Activated T-helper 1 cell treated with anti-CD3 and anti-CD28 coated beads, Interleukin-12 subunit alpha, Interleukin-12 subunit beta, Interleukin-2, Interleukin-4 antibody, amounts not matched to agents 30 ng/mL and 10 ng/mL and 1 ng/mL, durations not matched to agents 14 hours and 24 hours and 36 hours (primary cell): ENCODE measurements at regions of chr10 and their contacts with region 1.

Region 1: GRCh38 chr10:3935141-3935540 is 150.1 kb upstream of the KLF6 start:
- DNase-seq: peak; percentile 75
- H3K4me3 Mint-ChIP-seq: peak overlapping the region; percentile 56
- H3K27ac Mint-ChIP-seq: peak overlapping the region; percentile 86
- H3K4me1 Mint-ChIP-seq: peaks cover 67% of the 10 kb centered on the region
- H3K27me3 Mint-ChIP-seq: peaks cover 3% of the 10 kb centered on the region

Region 2: GRCh38 chr10:3330663-3331062 is 604.5 kb before region 1 on chr10:
- intact Hi-C with region 1: no loop called
- DNase-seq: no peak
- H3K4me3 Mint-ChIP-seq: no peak overlapping the region
- H3K27ac Mint-ChIP-seq: no peak overlapping the region
- H3K4me1 Mint-ChIP-seq: no peaks in the 10 kb centered on the region
- H3K27me3 Mint-ChIP-seq: no peaks in the 10 kb centered on the region

Region 3: GRCh38 chr10:3467052-3467951 is 467.8 kb before region 1 on chr10:
- intact Hi-C with region 1: loop called (anchors 2 kb)
- DNase-seq: no peak
- H3K4me3 Mint-ChIP-seq: peak overlapping the region; percentile 62
- H3K27ac Mint-ChIP-seq: peak overlapping the region; percentile 90
- H3K4me1 Mint-ChIP-seq: peaks cover 53% of the 10 kb centered on the region
- H3K27me3 Mint-ChIP-seq: no peaks in the 10 kb centered on the region

Region 4: GRCh38 chr10:3805791-3806461 is 129.2 kb before region 1 on chr10:
- intact Hi-C with region 1: loop called (anchors 1 kb)
- DNase-seq: no peak
- H3K4me3 Mint-ChIP-seq: peak overlapping the region; percentile 70
- H3K27ac Mint-ChIP-seq: peak overlapping the region; percentile 99
- H3K4me1 Mint-ChIP-seq: peaks cover 76% of the 10 kb centered on the region
- H3K27me3 Mint-ChIP-seq: no peaks in the 10 kb centered on the region

Region 5: GRCh38 chr10:3867454-3868270 is 67.5 kb before region 1 on chr10:
- intact Hi-C with region 1: loop called (anchors 1 kb)
- DNase-seq: no peak
- H3K4me3 Mint-ChIP-seq: no peak overlapping the region
- H3K27ac Mint-ChIP-seq: peak overlapping the region; percentile 77
- H3K4me1 Mint-ChIP-seq: peaks cover 72% of the 10 kb centered on the region
- H3K27me3 Mint-ChIP-seq: no peaks in the 10 kb centered on the region

Region 6: DNA sequence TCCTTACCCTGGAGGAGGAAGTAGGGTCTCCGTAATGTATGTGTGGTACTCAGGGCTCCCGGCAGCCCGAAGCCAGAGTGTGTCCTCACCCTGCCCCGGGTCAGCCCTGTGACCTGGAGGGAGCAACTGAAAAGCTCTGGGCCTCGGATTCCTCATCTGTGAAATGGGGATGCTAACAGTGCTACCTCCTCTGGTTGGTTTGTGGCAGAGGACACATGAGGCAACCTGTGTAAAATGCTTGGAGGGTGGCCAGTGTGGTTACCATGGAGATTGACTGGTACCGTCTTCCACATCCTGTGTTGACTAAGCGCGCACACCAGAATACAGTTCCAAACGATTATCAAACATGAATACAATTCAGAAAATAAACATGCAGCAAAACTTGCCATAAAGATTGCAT is 13.7 kb after region 1 on chr10:
- intact Hi-C with region 1: loop called (anchors 1 kb)
- DNase-seq: peak; percentile 66
- H3K4me3 Mint-ChIP-seq: peak overlapping the region; percentile 8
- H3K27ac Mint-ChIP-seq: peak overlapping the region; percentile 55
- H3K4me1 Mint-ChIP-seq: peaks cover 50% of the 10 kb centered on the region
- H3K27me3 Mint-ChIP-seq: no peaks in the 10 kb centered on the region

Region 7: DNA sequence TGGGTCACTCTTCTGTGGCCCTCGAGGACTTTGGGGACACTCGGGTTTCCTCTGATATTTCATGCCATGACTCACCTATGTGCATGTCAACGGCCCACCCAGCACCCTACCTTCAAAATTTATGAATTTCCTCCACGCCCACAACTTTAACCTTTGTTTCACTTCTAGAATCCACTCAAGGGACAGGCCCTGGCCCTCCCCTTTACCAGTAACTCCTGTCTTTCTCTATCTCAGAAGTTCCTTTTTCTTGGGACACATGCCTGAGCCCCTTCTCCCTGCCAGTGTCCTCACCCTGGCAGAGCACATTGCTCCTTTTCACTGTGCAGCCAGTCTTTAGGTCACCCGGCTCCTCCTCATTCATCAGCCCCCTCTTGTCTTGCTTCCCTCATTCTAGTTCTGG is 132.4 kb after region 1 on chr10:
- intact Hi-C with region 1: loop called (anchors 1 kb)
- DNase-seq: no peak
- H3K4me3 Mint-ChIP-seq: no peak overlapping the region
- H3K27ac Mint-ChIP-seq: no peak overlapping the region
- H3K4me1 Mint-ChIP-seq: no peaks in the 10 kb centered on the region
- H3K27me3 Mint-ChIP-seq: no peaks in the 10 kb centered on the region